ENCODE measurements at regions of chr1 and their contacts with region 1.

Region 1: DNA sequence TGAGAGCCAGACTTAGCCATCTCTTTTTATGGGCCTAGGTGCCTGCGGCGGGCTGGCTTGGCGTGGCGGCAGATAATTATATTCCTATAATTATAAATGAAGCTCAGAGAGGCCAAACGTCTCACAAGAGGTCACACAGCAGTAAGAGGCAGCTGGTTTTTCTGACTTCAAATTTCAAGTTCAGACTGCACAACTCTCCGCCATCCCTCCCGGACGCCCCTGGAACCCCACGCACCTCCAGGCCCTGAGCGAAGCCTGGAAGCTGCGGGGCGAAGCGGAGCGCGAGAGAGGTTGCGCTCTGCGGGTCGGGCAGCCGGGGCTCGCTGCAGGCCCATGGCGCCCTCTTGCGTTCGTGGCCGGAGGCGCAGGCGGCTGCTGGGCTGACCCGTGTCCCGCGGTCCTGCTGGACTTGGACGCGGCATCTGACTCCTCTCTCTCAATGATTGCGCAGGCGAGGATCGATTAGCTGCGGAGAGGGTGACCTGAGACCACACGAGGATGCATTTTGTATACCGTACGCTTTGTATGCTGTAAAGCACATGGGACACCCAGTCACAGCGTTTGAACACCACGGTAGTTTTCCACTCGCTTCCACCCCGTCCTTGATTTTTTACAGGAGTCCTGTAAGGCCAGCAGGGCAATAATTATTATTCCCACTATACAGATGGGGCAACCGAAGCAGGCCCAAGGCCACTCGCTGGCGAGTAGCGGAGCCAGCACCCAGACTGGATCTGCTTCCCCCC is 272.7 kb downstream of the FOXD2 start:
- DNase-seq: peak; percentile 60 to 84
- H3K4me3 ChIP-seq: peak overlapping the region; percentile 59
- H3K4me3 Mint-ChIP-seq: peak overlapping the region; percentile 73
- H3K27ac Mint-ChIP-seq: no peak overlapping the region
- H3K4me1 ChIP-seq: 0 out of 2 replicates have a peak, but pooled peaks cover 7% of the 10 kb centered on the region
- H3K4me1 Mint-ChIP-seq: peaks cover 6% of the 10 kb centered on the region
- H3K27me3 ChIP-seq: no peaks in the 10 kb centered on the region
- H3K27me3 Mint-ChIP-seq: peaks cover 4% of the 10 kb centered on the region
- CTCF ChIP-seq: peak; percentile 87 to 89

Region 2: GRCh38 chr1:47388891-47389238 is 321.6 kb before region 1 on chr1:
- CTCF ChIA-PET with region 1: interaction called, 9 read pairs
- POLR2A ChIA-PET with region 1: no interaction called
- intact Hi-C with region 1: loop called (anchors 1 kb)
- DNase-seq: peak; percentile 67 to 74
- H3K4me3 ChIP-seq: no peak overlapping the region
- H3K4me3 Mint-ChIP-seq: peak overlapping the region; percentile 15
- H3K27ac Mint-ChIP-seq: peak overlapping the region; percentile 69
- H3K4me1 ChIP-seq: peaks cover 48% of the 10 kb centered on the region
- H3K4me1 Mint-ChIP-seq: peaks cover 52% of the 10 kb centered on the region
- H3K27me3 ChIP-seq: no peaks in the 10 kb centered on the region
- H3K27me3 Mint-ChIP-seq: no peaks in the 10 kb centered on the region
- CTCF ChIP-seq: peak; percentile 70 to 74

Region 3: DNA sequence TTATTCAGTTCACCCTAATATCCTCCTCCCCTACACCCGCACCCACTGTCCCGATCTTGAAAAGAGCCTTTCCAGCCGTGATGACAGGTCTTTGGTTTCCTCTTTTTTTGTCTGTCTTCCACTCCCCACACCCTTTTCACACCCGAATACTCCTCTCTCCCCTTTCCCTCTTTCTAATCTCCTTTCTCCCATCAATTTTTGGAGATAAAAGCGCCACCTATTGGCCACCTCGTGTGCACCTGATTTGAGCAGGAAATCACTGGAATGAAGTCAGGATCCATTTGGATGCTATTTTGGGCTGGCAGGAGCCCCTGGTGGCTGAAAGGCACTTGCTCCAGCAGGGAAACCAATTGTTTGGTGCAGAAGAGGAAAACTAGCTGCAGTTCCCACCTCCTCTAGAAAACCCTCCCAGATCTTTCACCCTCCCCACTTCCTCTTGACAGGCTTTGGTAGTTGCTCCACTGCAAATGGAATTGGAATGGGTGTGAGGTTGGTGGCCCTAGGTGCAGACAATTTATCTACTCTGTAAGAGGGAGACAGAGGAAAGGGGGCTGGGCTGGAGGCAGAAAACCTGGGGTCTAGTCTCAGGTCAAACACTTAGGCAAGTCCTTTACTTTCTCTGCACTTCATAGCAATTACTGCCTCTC is 286.0 kb before region 1 on chr1:
- CTCF ChIA-PET with region 1: interaction called, 4 read pairs
- POLR2A ChIA-PET with region 1: no interaction called
- intact Hi-C with region 1: loop called (anchors 5 kb)
- DNase-seq: peak; percentile 61 to 75
- H3K4me3 ChIP-seq: no peak overlapping the region
- H3K4me3 Mint-ChIP-seq: no peak overlapping the region
- H3K27ac Mint-ChIP-seq: no peak overlapping the region
- H3K4me1 ChIP-seq: no peaks in the 10 kb centered on the region
- H3K4me1 Mint-ChIP-seq: peaks cover 7% of the 10 kb centered on the region
- H3K27me3 ChIP-seq: no peaks in the 10 kb centered on the region
- H3K27me3 Mint-ChIP-seq: no peaks in the 10 kb centered on the region
- CTCF ChIP-seq: peak; percentile 80 to 83

Region 4: GRCh38 chr1:47478090-47478489 is 232.4 kb before region 1 on chr1:
- CTCF ChIA-PET with region 1: interaction called, 6 read pairs
- POLR2A ChIA-PET with region 1: no interaction called
- intact Hi-C with region 1: loop called (anchors 1 kb)
- DNase-seq: peak; percentile 91 to 93
- H3K4me3 ChIP-seq: peak overlapping the region; percentile 13; the same call in 1 of the 2 replicates
- H3K4me3 Mint-ChIP-seq: peak overlapping the region; percentile 67
- H3K27ac Mint-ChIP-seq: peak overlapping the region; percentile 94
- H3K4me1 ChIP-seq: peaks cover 50% of the 10 kb centered on the region
- H3K4me1 Mint-ChIP-seq: peaks cover 47% of the 10 kb centered on the region
- H3K27me3 ChIP-seq: no peaks in the 10 kb centered on the region
- H3K27me3 Mint-ChIP-seq: no peaks in the 10 kb centered on the region
- CTCF ChIP-seq: no peak

Region 5: GRCh38 chr1:47527658-47528255 is 182.7 kb before region 1 on chr1:
- CTCF ChIA-PET with region 1: no interaction called
- POLR2A ChIA-PET with region 1: no interaction called
- intact Hi-C with region 1: loop called (anchors 1 kb)
- DNase-seq: peak in 1 of 2 experiments; percentile 45
- H3K4me3 ChIP-seq: no peak overlapping the region
- H3K4me3 Mint-ChIP-seq: no peak overlapping the region
- H3K27ac Mint-ChIP-seq: no peak overlapping the region
- H3K4me1 ChIP-seq: no peaks in the 10 kb centered on the region
- H3K4me1 Mint-ChIP-seq: peaks cover 12% of the 10 kb centered on the region
- H3K27me3 ChIP-seq: no peaks in the 10 kb centered on the region
- H3K27me3 Mint-ChIP-seq: no peaks in the 10 kb centered on the region
- CTCF ChIP-seq: peak in 1 of 2 experiments; percentile 43

Region 6: DNA sequence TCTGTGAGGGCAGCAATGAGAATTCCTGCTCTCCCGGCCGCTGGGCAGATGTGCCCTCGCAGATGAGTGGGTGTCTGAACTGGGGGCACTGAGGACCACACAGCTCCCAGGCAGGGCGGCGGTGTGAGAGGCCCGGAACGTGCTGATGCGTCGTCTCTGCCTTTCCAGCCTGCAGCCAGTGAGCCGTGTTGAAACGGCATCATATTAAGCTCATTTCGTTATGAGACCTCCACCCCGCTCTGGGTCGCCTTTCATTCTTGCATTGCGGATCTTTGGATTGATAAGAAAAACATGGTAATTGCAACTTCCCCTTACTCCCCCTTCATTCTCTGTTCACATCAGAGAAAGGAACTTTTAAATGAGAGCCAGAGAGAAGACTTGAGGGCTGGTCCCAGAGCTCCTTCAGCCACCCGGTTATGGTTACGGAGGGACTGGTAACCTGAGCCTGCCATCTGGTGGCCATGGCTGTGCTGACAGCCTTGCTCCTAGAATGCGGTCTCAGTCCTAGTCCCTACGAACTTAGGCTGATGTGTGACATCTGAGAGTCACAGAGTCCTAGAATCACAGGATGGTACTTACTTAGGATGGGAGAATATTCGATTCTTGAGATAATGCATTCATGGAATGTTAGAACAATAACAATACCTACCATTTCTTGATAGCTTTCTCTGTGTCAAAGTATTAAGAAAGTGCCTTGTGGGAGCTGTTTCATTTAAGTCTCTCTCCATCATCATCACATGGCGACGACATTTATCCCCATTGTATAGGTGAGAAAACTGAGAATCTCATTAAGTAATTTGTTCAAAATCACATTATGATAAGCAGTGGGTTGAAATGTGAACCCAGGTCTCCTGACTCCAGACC is 15.7 kb after region 1 on chr1:
- CTCF ChIA-PET with region 1: interaction called, 28 read pairs
- POLR2A ChIA-PET with region 1: no interaction called
- intact Hi-C with region 1: no loop called
- DNase-seq: peak; percentile 75 to 77
- H3K4me3 ChIP-seq: no peak overlapping the region
- H3K4me3 Mint-ChIP-seq: no peak overlapping the region
- H3K27ac Mint-ChIP-seq: no peak overlapping the region
- H3K4me1 ChIP-seq: peaks cover 24% of the 10 kb centered on the region
- H3K4me1 Mint-ChIP-seq: peaks cover 22% of the 10 kb centered on the region
- H3K27me3 ChIP-seq: no peaks in the 10 kb centered on the region
- H3K27me3 Mint-ChIP-seq: no peaks in the 10 kb centered on the region
- CTCF ChIP-seq: peak; percentile 71 to 79

Measured in Caco-2 (cell line).